Activated naive CD4-positive, alpha-beta T cell treated with anti-CD3 and anti-CD28 coated beads for 36 hours (primary cell): ENCODE measurements at regions of chr2 and their contacts with region 1.

Region 1: GRCh38 chr2:162478721-162479129 is 134.8 kb downstream of the GCA start:
- DNase-seq: no peak
- H3K4me3 Mint-ChIP-seq: no peak overlapping the region
- H3K27ac Mint-ChIP-seq: no peak overlapping the region
- H3K4me1 Mint-ChIP-seq: no peaks in the 10 kb centered on the region
- H3K27me3 Mint-ChIP-seq: no peaks in the 10 kb centered on the region

Region 2: DNA sequence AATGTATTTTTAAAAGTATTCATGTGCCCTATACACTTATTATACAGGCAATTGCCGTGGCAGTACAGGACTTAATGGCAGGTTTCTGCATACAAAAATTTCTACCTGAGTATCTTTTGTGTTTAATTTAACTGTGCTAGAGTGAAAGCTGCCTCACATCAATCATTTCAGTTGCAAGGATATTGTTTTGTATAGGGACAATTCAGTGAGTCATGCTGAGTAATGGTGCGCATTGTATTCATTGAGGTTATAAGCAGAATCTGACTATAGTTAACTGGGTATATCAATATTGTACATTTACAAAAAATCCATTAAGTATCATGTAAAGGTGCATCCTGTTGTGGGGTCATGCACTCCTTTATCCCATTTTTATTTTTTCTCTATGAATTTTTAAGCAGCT is 13.3 kb before region 1 on chr2:
- CTCF ChIA-PET with region 1: no interaction called
- intact Hi-C with region 1: loop called (anchors 1 kb)
- DNase-seq: no peak
- H3K4me3 Mint-ChIP-seq: no peak overlapping the region
- H3K27ac Mint-ChIP-seq: no peak overlapping the region
- H3K4me1 Mint-ChIP-seq: no peaks in the 10 kb centered on the region
- H3K27me3 Mint-ChIP-seq: peaks cover 2% of the 10 kb centered on the region

Region 3: GRCh38 chr2:162556996-162557395 is 78.3 kb after region 1 on chr2:
- CTCF ChIA-PET with region 1: no interaction called
- intact Hi-C with region 1: no loop called
- DNase-seq: no peak
- H3K4me3 Mint-ChIP-seq: no peak overlapping the region
- H3K27ac Mint-ChIP-seq: no peak overlapping the region
- H3K4me1 Mint-ChIP-seq: no peaks in the 10 kb centered on the region
- H3K27me3 Mint-ChIP-seq: no peaks in the 10 kb centered on the region

Region 4: GRCh38 chr2:162656516-162656915 is 177.8 kb after region 1 on chr2:
- CTCF ChIA-PET with region 1: no interaction called
- intact Hi-C with region 1: no loop called
- DNase-seq: no peak
- H3K4me3 Mint-ChIP-seq: no peak overlapping the region
- H3K27ac Mint-ChIP-seq: no peak overlapping the region
- H3K4me1 Mint-ChIP-seq: no peaks in the 10 kb centered on the region
- H3K27me3 Mint-ChIP-seq: no peaks in the 10 kb centered on the region